GM12878 (cell line): ENCODE measurements at regions of chr2 and their contacts with region 1.

Region 1: GRCh38 chr2:25165992-25166875 is 2.1 kb downstream of the POMC start:
- DNase-seq: peak; percentile 49
- ATAC-seq: peak; percentile 97
- H3K4me3 ChIP-seq: no peak overlapping the region
- H3K27ac ChIP-seq: no peak overlapping the region
- H3K4me1 ChIP-seq: peaks cover 18% of the 10 kb centered on the region
- H3K27me3 ChIP-seq: peaks cover 5 to 14% of the 10 kb centered on the region in 2 experiments; a peak in 3 of 4 replicates
- CTCF ChIP-seq: peak; percentile 74 to 97 (median 79)
- EP300 ChIP-seq: no peak
- POLR2A ChIP-seq: no peak
- RAD21 ChIP-seq: peak; percentile 82

Region 2: DNA sequence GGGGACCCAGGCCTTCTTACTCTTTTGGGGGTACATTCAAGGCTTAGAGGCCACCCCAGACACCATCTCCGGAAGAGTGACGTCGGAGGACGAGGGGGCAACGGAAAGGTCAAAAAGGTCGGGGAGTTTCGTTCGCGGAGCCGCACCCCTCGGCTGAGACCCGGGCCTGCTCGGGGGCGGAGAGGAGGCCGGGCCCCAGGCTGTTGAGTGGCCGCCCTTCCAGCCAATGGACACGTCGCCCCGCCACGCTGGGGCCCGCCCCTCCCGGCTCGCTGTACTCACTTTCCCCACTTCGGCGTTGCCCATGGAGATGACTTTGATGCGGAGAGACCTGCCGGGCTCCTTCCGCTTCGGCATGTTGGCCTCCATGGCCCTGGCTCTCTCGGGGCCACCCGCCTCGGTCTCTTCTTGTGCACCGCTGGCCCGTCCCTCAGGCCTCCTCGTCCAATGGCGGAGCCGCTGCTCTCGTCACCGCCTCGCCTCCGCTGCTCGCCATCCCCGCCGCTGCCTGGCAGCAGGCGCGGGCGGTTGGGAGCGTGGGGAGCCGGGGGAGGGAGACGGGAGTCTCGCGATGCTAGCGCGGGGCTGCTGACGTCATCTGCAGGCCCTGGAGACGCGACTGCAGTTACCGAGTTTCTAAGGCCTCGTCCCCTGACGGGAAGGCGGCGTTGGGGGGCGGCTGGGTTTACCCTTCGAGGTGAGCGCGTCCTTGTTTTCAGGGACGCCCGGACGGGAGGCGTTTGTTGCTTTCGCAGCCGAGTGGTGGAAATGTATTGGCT is 194.5 kb before region 1 on chr2 and contains the start of gene DNAJC27:
- CTCF ChIA-PET with region 1: interaction called, 14 read pairs
- POLR2A ChIA-PET with region 1: no interaction called
- RAD21 ChIA-PET with region 1: interaction called, 14 read pairs
- SMC1A ChIA-PET with region 1: interaction called, 5 read pairs
- in situ Hi-C with region 1: no loop called
- intact Hi-C with region 1: no loop called
- DNase-seq: peak; percentile 93
- ATAC-seq: peak; percentile 97
- H3K4me3 ChIP-seq: peak within 1 kb of the TSS; percentile 78
- H3K27ac ChIP-seq: peak within 1 kb of the TSS; percentile 95
- H3K4me1 ChIP-seq: no peaks in the 10 kb centered on the region
- H3K27me3 ChIP-seq: no peaks in the 10 kb centered on the region
- CTCF ChIP-seq: no peak
- EP300 ChIP-seq: no peak
- POLR2A ChIP-seq: peak; percentile 83
- RAD21 ChIP-seq: no peak
- polyA plus RNA-seq, gene DNAJC27: 0.95 to 1.3 TPM

Region 3: DNA sequence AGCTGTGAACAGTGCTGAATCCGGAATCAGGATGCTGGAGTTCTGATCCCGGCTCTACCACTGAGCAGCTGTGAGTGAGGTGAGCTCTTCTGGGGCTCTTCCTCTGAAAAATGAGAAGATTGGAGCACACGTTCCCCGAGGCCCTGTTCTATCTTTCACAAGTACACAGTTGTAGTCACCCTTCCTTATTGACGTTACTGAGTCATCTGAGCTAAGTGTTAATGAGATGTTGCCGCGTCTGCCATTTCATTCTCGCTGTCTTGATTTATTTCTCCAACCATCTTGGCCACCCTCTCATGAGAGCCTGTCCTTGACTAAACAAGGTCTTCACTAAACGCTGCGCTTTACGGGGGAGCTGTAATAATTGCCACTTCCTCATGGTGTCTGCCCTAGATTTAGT is 156.3 kb before region 1 on chr2:
- CTCF ChIA-PET with region 1: no interaction called
- POLR2A ChIA-PET with region 1: no interaction called
- RAD21 ChIA-PET with region 1: no interaction called
- SMC1A ChIA-PET with region 1: no interaction called
- in situ Hi-C with region 1: no loop called
- intact Hi-C with region 1: no loop called
- DNase-seq: no peak
- ATAC-seq: no peak
- H3K4me3 ChIP-seq: no peak overlapping the region
- H3K27ac ChIP-seq: no peak overlapping the region
- H3K4me1 ChIP-seq: no peaks in the 10 kb centered on the region
- H3K27me3 ChIP-seq: no peaks in the 10 kb centered on the region
- CTCF ChIP-seq: no peak
- EP300 ChIP-seq: no peak
- POLR2A ChIP-seq: no peak
- RAD21 ChIP-seq: no peak

Region 4: GRCh38 chr2:25197336-25198208 is 31.3 kb after region 1 on chr2:
- CTCF ChIA-PET with region 1: interaction called, 132 read pairs
- POLR2A ChIA-PET with region 1: no interaction called
- RAD21 ChIA-PET with region 1: interaction called, 79 read pairs
- SMC1A ChIA-PET with region 1: interaction called, 70 read pairs
- in situ Hi-C with region 1: no loop called
- intact Hi-C with region 1: loop called (anchors 1 kb)
- DNase-seq: no peak
- ATAC-seq: no peak
- H3K4me3 ChIP-seq: no peak overlapping the region
- H3K27ac ChIP-seq: no peak overlapping the region
- H3K4me1 ChIP-seq: peaks cover 7% of the 10 kb centered on the region; the same call in 1 of the 2 replicates
- H3K27me3 ChIP-seq: no peaks in the 10 kb centered on the region
- CTCF ChIP-seq: no peak
- EP300 ChIP-seq: no peak
- POLR2A ChIP-seq: no peak
- RAD21 ChIP-seq: no peak

Region 5: GRCh38 chr2:25276569-25277465 is 110.6 kb after region 1 on chr2:
- CTCF ChIA-PET with region 1: interaction called, 8 read pairs
- POLR2A ChIA-PET with region 1: interaction called, 4 read pairs
- RAD21 ChIA-PET with region 1: interaction called, 12 read pairs
- SMC1A ChIA-PET with region 1: interaction called, 8 read pairs
- in situ Hi-C with region 1: no loop called
- intact Hi-C with region 1: no loop called
- DNase-seq: no peak
- ATAC-seq: peak; percentile 41
- H3K4me3 ChIP-seq: peak overlapping the region; percentile 45; the same call in 1 of the 2 replicates
- H3K27ac ChIP-seq: peak overlapping the region; percentile 77
- H3K4me1 ChIP-seq: peaks cover 86% of the 10 kb centered on the region
- H3K27me3 ChIP-seq: no peaks in the 10 kb centered on the region
- CTCF ChIP-seq: peak; percentile 75 to 89 (median 80)
- EP300 ChIP-seq: 0 out of 4 replicates have a peak, but pooled peaks of 1 of the 2 experiments have one; percentile 34
- POLR2A ChIP-seq: peak; percentile 54; the same call in 1 of the 2 replicates
- RAD21 ChIP-seq: peak; percentile 58; the same call in 1 of the 2 replicates

Region 6: GRCh38 chr2:25521665-25522387 is 355.6 kb after region 1 on chr2:
- CTCF ChIA-PET with region 1: interaction called, 6 read pairs
- POLR2A ChIA-PET with region 1: no interaction called
- RAD21 ChIA-PET with region 1: interaction called, 3 read pairs
- SMC1A ChIA-PET with region 1: interaction called, 13 read pairs
- in situ Hi-C with region 1: no loop called
- intact Hi-C with region 1: loop called (anchors 2 kb)
- DNase-seq: peak; percentile 90
- ATAC-seq: peak; percentile 94
- H3K4me3 ChIP-seq: no peak overlapping the region
- H3K27ac ChIP-seq: peak overlapping the region; percentile 67
- H3K4me1 ChIP-seq: peaks cover 6% of the 10 kb centered on the region; the same call in 1 of the 2 replicates
- H3K27me3 ChIP-seq: no peaks in the 10 kb centered on the region
- CTCF ChIP-seq: peak; percentile 75 to 86 (median 81)
- EP300 ChIP-seq: 0 out of 4 replicates have a peak, but pooled peaks of 1 of the 2 experiments have one; percentile 12
- POLR2A ChIP-seq: no peak
- RAD21 ChIP-seq: peak; percentile 99

Region 7: DNA sequence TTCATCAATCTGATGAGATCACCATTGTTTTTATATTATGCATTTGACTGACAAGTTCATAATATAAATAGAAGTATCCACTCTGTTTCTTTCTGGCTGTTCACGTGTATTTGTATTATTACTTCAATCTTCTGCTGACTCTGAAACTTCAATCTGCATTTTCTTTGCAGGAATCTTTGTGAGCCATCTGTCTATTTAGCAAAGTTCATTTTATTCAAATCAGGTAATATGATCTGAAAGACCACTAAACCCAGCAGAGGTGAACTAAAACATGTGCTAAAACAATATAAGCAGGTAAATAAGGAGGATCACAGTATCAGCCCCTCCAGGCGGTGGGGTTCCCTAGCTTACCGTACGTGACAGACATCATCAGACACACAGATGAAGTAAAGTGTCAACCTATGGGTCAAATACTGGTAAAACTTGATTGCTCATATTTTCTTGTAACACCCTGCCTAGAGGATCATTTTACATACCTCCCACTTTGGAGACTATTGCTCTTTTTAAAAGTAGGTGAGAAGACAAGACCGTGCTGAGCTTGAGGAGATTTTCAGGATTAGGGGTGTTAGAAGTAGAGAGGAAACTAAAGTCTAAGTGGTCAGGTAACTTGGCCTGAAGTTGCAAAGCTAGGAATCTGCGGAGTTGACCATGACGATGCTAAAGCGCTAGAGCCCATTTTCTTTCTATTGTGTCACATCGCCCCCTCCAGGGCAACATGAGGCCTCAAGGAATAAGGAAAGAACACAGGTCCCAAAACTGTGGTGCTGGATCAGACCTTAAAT is 498.1 kb after region 1 on chr2:
- CTCF ChIA-PET with region 1: interaction called, 16 read pairs
- POLR2A ChIA-PET with region 1: no interaction called
- RAD21 ChIA-PET with region 1: interaction called, 8 read pairs
- SMC1A ChIA-PET with region 1: interaction called, 4 read pairs
- in situ Hi-C with region 1: no loop called
- intact Hi-C with region 1: no loop called
- DNase-seq: no peak
- ATAC-seq: peak; percentile 74
- H3K4me3 ChIP-seq: no peak overlapping the region
- H3K27ac ChIP-seq: no peak overlapping the region
- H3K4me1 ChIP-seq: no peaks in the 10 kb centered on the region
- H3K27me3 ChIP-seq: no peaks in the 10 kb centered on the region
- CTCF ChIP-seq: peak; percentile 63 to 72 (median 67)
- EP300 ChIP-seq: no peak
- POLR2A ChIP-seq: no peak
- RAD21 ChIP-seq: peak; percentile 95